ENCODE measurements at regions of chr20 and their contacts with region 1.

Region 1: GRCh38 chr20:64079273-64080012 is at the start of gene RGS19:
- DNase-seq: peak; percentile 75
- H3K4me3 Mint-ChIP-seq: peak within 1 kb of the TSS; percentile 93
- H3K27ac Mint-ChIP-seq: peak within 1 kb of the TSS; percentile 83
- H3K4me1 Mint-ChIP-seq: peaks cover 24% of the 10 kb centered on the region
- H3K27me3 Mint-ChIP-seq: peaks cover 8% of the 10 kb centered on the region
- total RNA-seq, gene RGS19: 54.7 and 55.9 TPM in 2 replicates

Region 2: DNA sequence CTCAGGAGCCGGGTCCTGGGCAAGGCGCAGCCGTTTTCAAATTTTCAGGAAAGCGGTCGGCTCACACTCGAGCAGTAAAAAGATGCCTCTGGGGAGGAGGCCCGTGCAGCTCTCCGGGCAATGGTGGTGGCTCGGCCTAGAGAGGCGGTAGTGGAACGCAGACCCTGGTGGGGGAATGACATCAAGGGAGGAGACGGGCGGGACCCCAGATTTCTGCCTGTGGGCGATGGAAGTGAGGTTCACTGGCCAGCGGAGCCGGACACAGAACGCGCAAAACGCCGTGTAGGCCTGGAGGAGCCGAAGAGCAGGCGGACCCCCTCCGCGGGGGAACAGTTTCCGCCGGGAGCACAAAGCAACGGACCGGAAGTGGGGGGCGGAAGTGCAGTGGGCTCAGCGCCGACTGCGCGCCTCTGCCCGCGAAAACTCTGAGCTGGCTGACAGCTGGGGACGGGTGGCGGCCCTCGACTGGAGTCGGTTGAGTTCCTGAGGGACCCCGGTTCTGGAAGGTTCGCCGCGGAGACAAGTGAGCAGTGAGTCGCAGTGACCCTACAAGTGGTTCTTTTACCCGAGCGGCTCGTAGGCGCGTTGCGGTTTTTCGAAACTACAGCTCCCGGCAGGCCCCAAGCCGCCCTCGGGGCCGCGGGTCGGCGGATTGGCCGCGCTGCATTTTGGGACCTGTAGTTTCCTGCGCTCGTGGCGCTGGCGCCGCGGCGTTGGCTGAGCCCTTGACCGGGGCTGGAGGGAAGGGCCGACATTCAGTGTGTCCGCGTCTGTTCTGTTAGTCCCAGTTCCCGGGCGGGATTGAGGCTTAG is 421.3 kb before region 1 on chr20 and contains the start of gene RTEL1:
- intact Hi-C with region 1: loop called (anchors 5 kb)
- DNase-seq: peak; percentile 87
- H3K4me3 Mint-ChIP-seq: peak within 1 kb of the TSS; percentile 94
- H3K27ac Mint-ChIP-seq: peak within 1 kb of the TSS; percentile 95
- H3K4me1 Mint-ChIP-seq: peaks cover 41% of the 10 kb centered on the region
- H3K27me3 Mint-ChIP-seq: peaks cover 7% of the 10 kb centered on the region
- total RNA-seq, gene RTEL1: 54.4 and 55.5 TPM in 2 replicates

Region 3: DNA sequence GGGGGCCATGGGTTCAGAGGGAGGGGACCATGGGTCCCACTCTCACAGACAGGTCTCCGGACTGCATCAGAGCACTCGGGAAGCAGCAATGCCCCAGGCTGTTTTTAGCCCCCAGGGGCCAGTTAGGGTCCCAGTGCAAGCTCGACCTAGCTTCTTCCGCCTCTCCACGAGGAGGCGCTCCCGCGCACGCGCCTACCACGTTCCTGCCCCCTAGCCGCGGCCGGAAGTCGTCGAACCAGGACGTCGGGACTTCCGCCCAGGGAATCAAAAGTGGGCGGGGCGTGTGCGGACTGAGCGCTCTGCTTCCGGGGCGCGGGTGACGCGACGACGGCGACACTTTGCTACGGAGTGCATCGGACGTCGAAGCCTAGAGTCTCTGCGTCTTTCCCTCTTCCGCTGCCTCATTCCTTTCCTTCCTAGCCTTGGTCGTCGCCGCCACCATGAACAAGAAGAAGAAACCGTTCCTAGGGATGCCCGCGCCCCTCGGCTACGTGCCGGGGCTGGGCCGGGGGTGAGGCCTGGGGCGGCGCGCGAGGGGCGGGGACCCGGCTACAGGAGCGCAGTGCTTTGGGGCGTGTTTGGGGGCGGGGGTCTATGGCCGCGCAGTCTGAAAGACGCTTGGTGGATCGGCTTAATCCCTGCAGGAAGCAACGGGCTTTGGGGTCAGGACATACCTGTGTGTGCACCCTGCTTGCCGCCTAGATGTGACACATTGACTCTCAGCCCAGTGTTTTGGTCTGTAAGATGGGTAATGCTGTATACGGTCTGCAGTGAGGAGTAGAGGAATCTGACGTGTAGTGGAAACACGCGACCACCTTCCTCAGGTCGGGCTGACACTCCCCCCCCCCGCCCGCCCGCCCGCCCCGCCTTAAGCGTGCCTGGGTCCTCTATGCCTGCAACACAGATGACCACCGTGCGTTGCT is 98.4 kb before region 1 on chr20 and contains the start of gene PRPF6:
- intact Hi-C with region 1: loop called (anchors 1 kb)
- DNase-seq: peak; percentile 94
- H3K4me3 Mint-ChIP-seq: peak within 1 kb of the TSS; percentile 98
- H3K27ac Mint-ChIP-seq: peak within 1 kb of the TSS; percentile 99
- H3K4me1 Mint-ChIP-seq: peaks cover 64% of the 10 kb centered on the region
- H3K27me3 Mint-ChIP-seq: no peaks in the 10 kb centered on the region
- total RNA-seq, gene PRPF6: 82.3 and 83.6 TPM in 2 replicates

Region 4: GRCh38 chr20:64119681-64120341 is 40.4 kb after region 1 on chr20:
- intact Hi-C with region 1: loop called (anchors 1 kb)
- DNase-seq: no peak
- H3K4me3 Mint-ChIP-seq: peak overlapping the region; percentile 51
- H3K27ac Mint-ChIP-seq: peak overlapping the region; percentile 44
- H3K4me1 Mint-ChIP-seq: peaks cover 10% of the 10 kb centered on the region
- H3K27me3 Mint-ChIP-seq: peaks cover 13% of the 10 kb centered on the region

Region 5: GRCh38 chr20:64232794-64233193 is 153.4 kb after region 1 on chr20:
- intact Hi-C with region 1: no loop called
- DNase-seq: no peak
- H3K4me3 Mint-ChIP-seq: no peak overlapping the region
- H3K27ac Mint-ChIP-seq: no peak overlapping the region
- H3K4me1 Mint-ChIP-seq: peaks cover 5% of the 10 kb centered on the region
- H3K27me3 Mint-ChIP-seq: no peaks in the 10 kb centered on the region

Region 6: DNA sequence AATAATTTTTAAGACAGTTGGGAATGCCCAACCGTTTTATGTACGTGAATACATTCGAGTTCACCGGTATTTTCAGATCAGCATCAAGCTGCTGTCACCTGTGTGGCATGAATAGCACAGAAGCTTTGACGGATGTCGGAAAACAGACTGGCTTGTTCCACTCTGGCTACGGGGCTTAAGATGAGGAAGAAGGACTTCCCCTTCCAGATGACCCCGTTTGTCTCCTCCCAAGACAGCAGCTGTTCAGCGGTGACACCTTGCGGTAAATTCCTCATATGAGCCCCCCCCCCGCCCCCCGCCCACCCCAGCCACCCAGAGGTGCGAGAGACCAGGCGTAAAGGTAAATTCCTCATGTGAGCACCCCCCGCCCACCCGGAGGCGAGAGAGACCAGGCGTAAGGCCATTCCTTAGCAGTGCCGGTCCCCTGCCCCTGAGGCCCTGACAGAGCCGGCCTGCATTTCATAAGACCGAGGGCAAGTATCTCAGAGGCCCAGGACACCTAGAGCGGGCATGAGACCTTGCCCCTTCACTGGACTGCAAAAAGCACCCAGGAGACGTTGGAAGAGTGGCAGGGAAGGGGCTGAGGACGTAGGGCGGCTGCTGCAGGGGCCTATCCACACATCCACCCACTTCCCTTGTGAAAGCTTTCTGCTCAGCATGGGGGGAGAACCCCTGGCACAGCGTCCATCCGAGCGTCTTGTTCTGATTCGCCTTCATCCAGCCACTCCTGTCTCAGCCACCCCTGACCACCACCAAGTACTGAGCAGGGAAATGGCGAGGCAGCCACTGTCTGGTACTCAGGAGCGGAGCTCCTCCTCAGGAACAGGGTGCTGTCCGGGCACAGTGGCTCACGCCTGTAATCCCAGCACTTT is 168.8 kb after region 1 on chr20:
- intact Hi-C with region 1: no loop called
- DNase-seq: no peak
- H3K4me3 Mint-ChIP-seq: no peak overlapping the region
- H3K27ac Mint-ChIP-seq: no peak overlapping the region
- H3K4me1 Mint-ChIP-seq: no peaks in the 10 kb centered on the region
- H3K27me3 Mint-ChIP-seq: peaks cover 40% of the 10 kb centered on the region

Measured in activated T-helper 1 cell treated with anti-CD3 and anti-CD28 coated beads, Interleukin-12 subunit alpha, Interleukin-12 subunit beta, Interleukin-2, Interleukin-4 antibody, amounts not matched to agents 30 ng/mL and 10 ng/mL and 1 ng/mL, durations not matched to agents 14 hours and 24 hours and 36 hours (primary cell).